Calu3 (cell line): ENCODE measurements at regions of chr3 and their contacts with region 1.

Region 1: GRCh38 chr3:21256932-21257331 is 494.1 kb downstream of the ZNF385D start:
- DNase-seq: peak; percentile 64
- H3K4me3 Mint-ChIP-seq: peak overlapping the region; percentile 18
- H3K27ac Mint-ChIP-seq: peak overlapping the region; percentile 56
- H3K4me1 Mint-ChIP-seq: peaks cover 43% of the 10 kb centered on the region
- H3K27me3 Mint-ChIP-seq: no peaks in the 10 kb centered on the region
- CTCF ChIP-seq: no peak

Region 2: GRCh38 chr3:21390136-21390535 is 133.2 kb after region 1 on chr3:
- CTCF ChIA-PET with region 1: no interaction called
- intact Hi-C with region 1: loop called (anchors 5 kb)
- DNase-seq: no peak
- H3K4me3 Mint-ChIP-seq: no peak overlapping the region
- H3K27ac Mint-ChIP-seq: peak overlapping the region; percentile 21
- H3K4me1 Mint-ChIP-seq: peaks cover 23% of the 10 kb centered on the region
- H3K27me3 Mint-ChIP-seq: no peaks in the 10 kb centered on the region
- CTCF ChIP-seq: no peak

Region 3: DNA sequence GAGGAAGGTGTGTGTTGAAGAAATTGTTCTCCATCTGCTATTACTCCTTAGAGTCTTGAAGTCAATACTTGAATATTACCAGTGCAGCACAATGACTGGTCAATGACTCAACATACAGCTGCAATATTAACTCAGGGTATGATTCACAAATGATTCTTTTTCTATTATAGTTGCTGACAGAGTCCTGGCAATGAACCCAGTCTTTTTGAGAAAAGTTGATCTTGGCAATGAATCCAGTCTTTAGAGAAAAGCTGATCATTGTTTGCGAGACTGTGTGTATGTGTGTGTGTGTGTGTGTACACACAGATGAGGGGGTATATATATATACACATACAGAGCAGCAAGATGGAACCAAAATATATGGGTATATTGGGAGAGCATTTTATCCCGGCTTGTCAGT is 178.9 kb after region 1 on chr3:
- CTCF ChIA-PET with region 1: interaction called, 4 read pairs
- intact Hi-C with region 1: loop called (anchors 5 kb)
- DNase-seq: peak; percentile 52
- H3K4me3 Mint-ChIP-seq: no peak overlapping the region
- H3K27ac Mint-ChIP-seq: peak overlapping the region; percentile 79
- H3K4me1 Mint-ChIP-seq: peaks cover 39% of the 10 kb centered on the region
- H3K27me3 Mint-ChIP-seq: no peaks in the 10 kb centered on the region
- CTCF ChIP-seq: no peak